ENCODE measurements at regions of chr3 and their contacts with region 1.

Region 1: GRCh38 chr3:129399145-129399894 is 29.1 kb downstream of the EFCAB12 start:
- DNase-seq: peak; percentile 95
- H3K4me3 ChIP-seq: peak overlapping the region; percentile 74 to 82 (median 81)
- H3K27ac ChIP-seq: peak overlapping the region; percentile 84
- H3K4me1 ChIP-seq: peaks cover 4% of the 10 kb centered on the region
- H3K27me3 ChIP-seq: no peaks in the 10 kb centered on the region
- CTCF ChIP-seq: peak; percentile 70 to 84
- POLR2A ChIP-seq: peak; percentile 64

Region 2: GRCh38 chr3:129428376-129429079 is 29.2 kb after region 1 on chr3 and contains the start of gene EFCAB12:
- CTCF ChIA-PET with region 1: interaction called, 3 read pairs
- POLR2A ChIA-PET with region 1: no interaction called
- dilution Hi-C with region 1: no loop called
- intact Hi-C with region 1: loop called (anchors 1 kb)
- DNase-seq: peak; percentile 97
- H3K4me3 ChIP-seq: peak within 1 kb of the TSS; percentile 17 to 45 (median 40)
- H3K27ac ChIP-seq: no peak within 1 kb of the TSS
- H3K4me1 ChIP-seq: peaks cover 6% of the 10 kb centered on the region
- H3K27me3 ChIP-seq: peaks cover 0 to 4% of the 10 kb centered on the region in 2 experiments
- CTCF ChIP-seq: no peak
- POLR2A ChIP-seq: no peak
- total RNA-seq, gene EFCAB12: 0.25 and 0.49 TPM in 2 replicates

Region 3: GRCh38 chr3:129474984-129475804 is 75.9 kb after region 1 on chr3:
- CTCF ChIA-PET with region 1: no interaction called
- POLR2A ChIA-PET with region 1: interaction called, 11 read pairs
- dilution Hi-C with region 1: no loop called
- intact Hi-C with region 1: no loop called
- DNase-seq: no peak
- H3K4me3 ChIP-seq: no peak overlapping the region
- H3K27ac ChIP-seq: no peak overlapping the region
- H3K4me1 ChIP-seq: no peaks in the 10 kb centered on the region
- H3K27me3 ChIP-seq: no peaks in the 10 kb centered on the region
- CTCF ChIP-seq: no peak
- POLR2A ChIP-seq: no peak